PC-9 (cell line): ENCODE measurements at regions of chr1 and their contacts with region 1.

Region 1: DNA sequence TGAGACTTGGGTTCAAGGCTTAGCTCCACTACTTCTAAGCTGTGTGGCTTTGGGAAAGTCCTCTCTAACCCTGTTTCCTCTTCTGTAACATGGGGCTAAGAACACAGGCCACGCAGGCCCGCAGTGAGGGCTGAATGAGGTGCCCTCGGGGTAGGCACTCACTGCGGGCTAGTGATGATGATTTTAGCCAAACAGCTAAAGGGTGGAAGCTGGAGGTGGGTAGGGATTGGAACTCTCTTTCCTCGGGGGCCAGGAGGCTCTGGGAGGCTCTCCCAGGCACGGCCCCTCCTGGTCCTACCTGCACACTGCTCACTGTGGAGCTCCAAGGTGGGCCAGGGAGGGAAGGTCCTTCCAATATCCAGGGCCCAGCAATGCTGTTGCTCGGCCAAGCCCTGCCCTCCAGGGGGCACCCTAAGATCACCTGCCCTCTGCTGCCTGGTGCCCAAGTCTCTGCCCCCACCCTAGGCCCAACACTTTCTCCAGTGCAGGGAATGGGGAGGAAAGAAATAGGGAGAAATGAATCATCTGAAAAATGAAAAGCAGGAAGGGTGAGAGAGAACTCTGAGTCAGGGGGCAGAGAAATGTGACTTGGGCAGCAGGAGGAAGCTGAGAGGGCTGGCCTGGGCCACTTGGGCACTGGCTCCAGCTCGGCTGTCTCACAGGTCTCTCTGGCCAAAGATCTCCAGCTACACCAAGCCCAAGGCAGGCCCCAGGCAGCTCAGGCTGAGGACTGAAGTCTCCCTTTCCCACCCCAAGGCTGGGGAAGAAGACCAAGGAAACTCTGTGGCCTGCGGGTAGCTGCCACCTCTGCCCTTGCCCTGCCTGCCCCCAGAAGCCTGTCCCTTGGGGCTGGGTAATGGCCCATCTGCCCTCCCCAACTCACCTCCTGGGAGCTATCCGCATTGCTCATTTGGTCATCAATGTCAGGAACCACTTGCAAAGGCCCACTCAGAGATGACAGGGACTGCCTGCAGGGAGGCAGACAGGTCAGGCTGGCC is 19.3 kb upstream of the EVA1B start:
- DNase-seq: peak; percentile 88 to 89
- H3K4me3 ChIP-seq: no peak overlapping the region
- H3K27ac ChIP-seq: peak overlapping the region; percentile 75
- H3K4me1 ChIP-seq: peaks cover 20% of the 10 kb centered on the region
- H3K27me3 ChIP-seq: no peaks in the 10 kb centered on the region
- CTCF ChIP-seq: peak; percentile 88

Region 2: DNA sequence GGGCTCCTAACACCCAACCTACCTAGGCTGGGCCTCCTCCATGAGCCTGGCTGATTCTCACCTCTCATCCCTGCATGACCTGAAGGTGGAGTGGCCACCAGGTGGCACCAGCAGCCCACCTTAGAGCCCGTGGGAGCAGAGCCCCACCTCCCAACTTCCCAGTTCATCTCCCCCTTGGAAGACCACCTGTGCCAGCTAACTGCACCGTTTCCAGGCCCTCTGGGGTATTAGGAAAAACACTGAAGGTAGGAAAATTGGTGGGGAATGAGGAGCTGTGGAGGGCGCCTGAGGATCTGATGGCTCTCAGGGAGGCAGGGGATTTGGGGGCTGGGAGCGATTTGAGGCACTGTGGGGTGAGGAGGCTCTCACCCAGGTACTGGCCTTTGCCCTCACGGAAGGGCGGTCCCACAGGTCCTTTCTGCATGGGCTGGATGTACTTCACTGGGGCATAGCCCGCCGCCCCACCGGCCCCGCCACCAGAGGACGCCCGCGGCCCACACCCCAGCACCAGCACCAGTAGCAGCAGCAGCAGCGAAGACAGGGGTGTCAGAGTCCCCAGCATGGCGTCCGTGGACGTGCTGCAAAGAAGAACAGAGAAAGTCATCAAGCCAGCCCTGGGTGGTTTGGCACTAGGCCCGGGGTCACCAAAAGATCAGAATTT is 243.0 kb before region 1 on chr1:
- CTCF ChIA-PET with region 1: interaction called, 3 read pairs
- POLR2A ChIA-PET with region 1: no interaction called
- intact Hi-C with region 1: loop called (anchors 2 kb)
- DNase-seq: peak; percentile 71 to 94
- H3K4me3 ChIP-seq: no peak overlapping the region
- H3K27ac ChIP-seq: no peak overlapping the region
- H3K4me1 ChIP-seq: peaks cover 4% of the 10 kb centered on the region; the same call in 1 of the 2 replicates
- H3K27me3 ChIP-seq: no peaks in the 10 kb centered on the region
- CTCF ChIP-seq: peak; percentile 91

Region 3: GRCh38 chr1:36369061-36369861 is 26.5 kb after region 1 on chr1:
- CTCF ChIA-PET with region 1: interaction called, 21 read pairs
- POLR2A ChIA-PET with region 1: no interaction called
- intact Hi-C with region 1: loop called (anchors 1 kb)
- DNase-seq: peak; percentile 51 to 84
- H3K4me3 ChIP-seq: no peak overlapping the region
- H3K27ac ChIP-seq: peak overlapping the region; percentile 13; the same call in 1 of the 2 replicates
- H3K4me1 ChIP-seq: peaks cover 36% of the 10 kb centered on the region
- H3K27me3 ChIP-seq: no peaks in the 10 kb centered on the region
- CTCF ChIP-seq: peak; percentile 95

Region 4: DNA sequence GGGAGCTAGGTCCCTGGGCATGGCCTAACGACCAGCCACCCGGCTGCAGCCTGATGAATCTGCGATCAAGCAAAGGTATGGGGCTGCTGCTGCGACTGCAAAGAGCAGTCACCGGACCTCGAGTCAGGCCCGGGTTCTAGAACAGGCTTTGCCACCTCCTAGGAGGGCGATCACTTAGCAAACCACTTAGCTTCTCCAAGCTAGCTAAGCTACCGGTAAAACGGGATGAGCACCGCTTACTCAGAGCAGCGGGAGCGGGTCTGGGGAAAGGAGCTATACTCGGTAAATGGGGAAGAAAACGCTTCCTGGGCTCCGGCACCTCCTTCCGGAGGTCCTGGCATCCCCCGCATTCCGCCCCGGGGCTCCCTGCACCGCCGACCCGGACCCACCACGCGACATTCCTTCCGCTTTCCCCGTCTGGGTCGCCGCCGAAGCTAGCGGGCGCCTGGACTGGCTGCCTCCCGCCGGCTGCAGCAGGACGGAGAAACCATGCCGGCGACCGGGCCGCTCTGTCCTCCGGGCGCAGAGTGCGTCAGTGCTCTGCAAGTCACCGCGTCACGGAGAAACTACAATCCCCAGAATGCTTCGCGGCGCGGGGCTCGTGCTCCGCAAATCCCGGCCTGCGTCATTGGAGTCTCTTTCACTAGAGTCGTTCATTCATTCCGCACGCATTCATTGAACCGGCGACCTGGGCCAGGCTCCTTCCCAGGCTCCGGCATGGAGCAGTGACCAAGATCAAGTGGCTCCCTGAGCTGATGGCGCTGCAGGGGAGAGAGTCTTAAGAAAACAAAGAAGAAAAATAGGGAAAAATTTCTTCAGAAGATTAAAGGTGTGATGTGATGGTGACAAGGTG is 54.8 kb after region 1 on chr1 and contains the start of gene LSM10:
- CTCF ChIA-PET with region 1: no interaction called
- POLR2A ChIA-PET with region 1: no interaction called
- intact Hi-C with region 1: loop called (anchors 2 kb)
- DNase-seq: peak; percentile 87 to 92
- H3K4me3 ChIP-seq: peak within 1 kb of the TSS; percentile 85
- H3K27ac ChIP-seq: peak within 1 kb of the TSS; percentile 28; the same call in 1 of the 2 replicates
- H3K4me1 ChIP-seq: peaks cover 10% of the 10 kb centered on the region
- H3K27me3 ChIP-seq: no peaks in the 10 kb centered on the region
- CTCF ChIP-seq: no peak
- total RNA-seq, gene LSM10: 33.4 and 39.7 TPM in 2 replicates

Region 5: DNA sequence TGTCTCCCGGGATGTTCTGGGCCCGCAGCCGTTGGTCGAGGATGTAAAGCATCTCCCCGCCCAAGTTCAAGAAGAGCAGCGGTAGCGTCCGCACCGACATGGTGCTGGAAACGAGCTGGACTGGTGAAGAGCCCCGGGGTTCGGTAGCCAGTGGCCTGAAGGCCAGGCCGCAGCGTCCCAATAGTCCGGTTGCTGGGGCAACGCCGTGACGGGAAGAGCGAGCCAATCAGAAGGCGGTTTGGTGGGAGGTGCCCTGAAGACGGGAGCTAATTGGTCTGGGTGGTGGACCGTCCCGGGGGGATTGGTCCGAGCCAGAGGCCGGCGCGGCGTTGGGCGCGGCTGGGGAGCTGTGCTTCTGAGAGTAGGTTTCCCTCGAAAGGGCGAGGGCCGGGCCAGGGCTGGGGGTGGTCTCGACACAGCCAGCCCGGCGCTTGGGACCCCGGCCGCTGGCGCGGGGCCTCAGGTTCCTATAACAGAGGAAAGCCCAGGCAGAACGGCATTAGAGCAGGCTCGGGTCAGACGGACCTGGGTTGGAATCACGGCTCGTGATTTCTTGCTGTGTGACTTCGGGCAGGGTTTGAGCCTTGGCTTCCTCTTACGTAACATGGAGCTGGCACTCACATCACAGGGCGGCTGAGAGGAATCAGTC is 107.6 kb after region 1 on chr1 and contains the start of gene OSCP1:
- CTCF ChIA-PET with region 1: interaction called, 4 read pairs
- POLR2A ChIA-PET with region 1: no interaction called
- intact Hi-C with region 1: loop called (anchors 1 kb)
- DNase-seq: peak; percentile 89 to 98
- H3K4me3 ChIP-seq: peak within 1 kb of the TSS; percentile 87
- H3K27ac ChIP-seq: peak within 1 kb of the TSS; percentile 73
- H3K4me1 ChIP-seq: no peaks in the 10 kb centered on the region
- H3K27me3 ChIP-seq: no peaks in the 10 kb centered on the region
- CTCF ChIP-seq: no peak; the same call in 1 of the 2 replicates
- total RNA-seq, gene OSCP1: 21.6 and 25.7 TPM in 2 replicates

Region 6: DNA sequence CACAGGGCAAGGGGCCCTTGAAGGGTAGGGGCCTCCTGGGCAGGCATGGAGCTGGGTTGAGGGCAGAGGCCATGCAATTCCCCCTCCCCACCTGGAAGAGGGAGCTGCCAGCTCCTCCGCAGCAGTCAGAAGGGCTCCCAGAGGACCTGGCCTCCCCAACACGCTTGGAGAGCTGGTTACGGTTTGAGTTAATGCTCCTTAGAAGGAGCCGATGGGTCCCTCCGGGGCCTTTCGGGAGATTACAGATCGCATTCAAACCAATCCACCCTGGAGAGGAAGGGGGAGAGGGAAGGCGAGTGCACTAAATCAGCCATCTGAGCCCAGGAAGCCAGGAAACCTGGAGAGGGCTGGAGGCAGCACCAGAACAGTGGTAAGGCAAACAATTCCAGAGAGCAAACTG is 246.2 kb after region 1 on chr1:
- CTCF ChIA-PET with region 1: interaction called, 12 read pairs
- POLR2A ChIA-PET with region 1: no interaction called
- intact Hi-C with region 1: no loop called
- DNase-seq: no peak
- H3K4me3 ChIP-seq: no peak overlapping the region
- H3K27ac ChIP-seq: no peak overlapping the region
- H3K4me1 ChIP-seq: no peaks in the 10 kb centered on the region
- H3K27me3 ChIP-seq: peaks cover 96% of the 10 kb centered on the region
- CTCF ChIP-seq: no peak